Sigmoid colon (tissue), 7 donors: ENCODE measurements at regions of chr19 and their contacts with region 1.

Region 1: GRCh38 chr19:13262450-13262849 is 112.2 kb downstream of the IER2 start:
- DNase-seq: no peak
- H3K4me3 ChIP-seq: no peak overlapping the region
- H3K27ac ChIP-seq: no peak overlapping the region
- H3K4me1 ChIP-seq: no peaks in the 10 kb centered on the region
- H3K27me3 ChIP-seq: peaks cover 0 to 7% (median 0%) of the 10 kb centered on the region in 3 donors
- CTCF ChIP-seq: peak; percentile 43 to 56 (median 49)
- EP300 ChIP-seq: no peak
- POLR2A ChIP-seq: no peak

Region 2: DNA sequence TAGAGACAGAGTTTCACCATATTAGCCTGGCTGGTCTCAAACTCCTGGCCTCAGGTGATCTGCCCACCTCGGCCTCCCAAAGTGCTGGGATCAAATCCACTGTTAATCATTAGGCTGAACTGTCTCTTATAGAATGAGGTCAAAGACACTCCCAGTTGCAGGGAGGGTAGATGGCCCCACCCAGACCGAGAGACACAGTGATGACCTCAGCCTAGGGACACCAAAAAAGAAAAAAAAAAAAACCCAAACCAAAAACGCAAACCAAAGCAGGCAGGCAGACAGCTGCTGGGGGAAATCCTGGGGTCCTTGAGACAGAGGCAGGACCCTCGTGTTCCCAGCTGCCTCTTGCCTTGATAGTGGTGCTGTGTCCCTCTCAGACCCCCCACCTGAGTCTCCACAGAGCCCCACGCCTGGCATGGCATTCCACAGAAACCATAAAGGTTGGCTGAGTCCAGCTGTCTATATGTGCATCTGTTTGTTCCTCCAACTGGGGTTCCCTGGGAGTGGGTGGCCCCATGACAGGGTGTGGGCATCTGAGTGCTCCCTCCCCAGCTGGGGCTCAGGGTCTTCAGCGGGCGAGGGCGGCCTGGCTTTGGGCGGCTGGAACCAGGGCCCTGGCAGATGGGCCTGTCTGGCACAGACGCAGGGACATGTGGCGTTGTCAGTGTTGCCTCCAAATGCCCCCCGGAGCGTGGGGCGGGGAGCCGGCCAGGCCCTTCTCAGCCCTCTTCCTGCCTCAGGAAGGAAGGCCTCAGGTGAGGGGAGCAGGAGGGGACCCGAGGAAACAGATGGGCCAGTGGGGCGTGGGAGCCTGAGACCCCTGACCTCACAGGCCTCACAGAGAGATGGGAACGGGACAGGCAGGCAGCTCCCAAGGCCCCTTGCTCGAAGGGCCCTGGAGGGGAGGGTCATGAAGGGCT is 287.9 kb before region 1 on chr19:
- intact Hi-C with region 1: loop called (anchors 2 kb)
- DNase-seq: no peak
- H3K4me3 ChIP-seq: no peak overlapping the region
- H3K27ac ChIP-seq: no peak overlapping the region
- H3K4me1 ChIP-seq: peaks cover 0 to 10% (median 3%) of the 10 kb centered on the region in 4 donors
- H3K27me3 ChIP-seq: no peaks in the 10 kb centered on the region
- CTCF ChIP-seq: no peak
- EP300 ChIP-seq: no peak
- POLR2A ChIP-seq: no peak

Region 3: GRCh38 chr19:13117772-13118423 is 144.6 kb before region 1 on chr19 and contains the start of gene NACC1:
- intact Hi-C with region 1: loop called (anchors 5 kb)
- DNase-seq: peak; percentile 93
- H3K4me3 ChIP-seq: peak within 1 kb of the TSS; percentile 91 to 99 (median 96)
- H3K27ac ChIP-seq: peak within 1 kb of the TSS; percentile 74 to 83 (median 78)
- H3K4me1 ChIP-seq: peaks cover 0 to 49% (median 43%) of the 10 kb centered on the region in 4 donors
- H3K27me3 ChIP-seq: no peaks in the 10 kb centered on the region
- CTCF ChIP-seq: no peak
- EP300 ChIP-seq: no peak
- POLR2A ChIP-seq: no peak
- total RNA-seq, gene NACC1: 8.1 to 20.5 (median 17.3) TPM

Region 4: DNA sequence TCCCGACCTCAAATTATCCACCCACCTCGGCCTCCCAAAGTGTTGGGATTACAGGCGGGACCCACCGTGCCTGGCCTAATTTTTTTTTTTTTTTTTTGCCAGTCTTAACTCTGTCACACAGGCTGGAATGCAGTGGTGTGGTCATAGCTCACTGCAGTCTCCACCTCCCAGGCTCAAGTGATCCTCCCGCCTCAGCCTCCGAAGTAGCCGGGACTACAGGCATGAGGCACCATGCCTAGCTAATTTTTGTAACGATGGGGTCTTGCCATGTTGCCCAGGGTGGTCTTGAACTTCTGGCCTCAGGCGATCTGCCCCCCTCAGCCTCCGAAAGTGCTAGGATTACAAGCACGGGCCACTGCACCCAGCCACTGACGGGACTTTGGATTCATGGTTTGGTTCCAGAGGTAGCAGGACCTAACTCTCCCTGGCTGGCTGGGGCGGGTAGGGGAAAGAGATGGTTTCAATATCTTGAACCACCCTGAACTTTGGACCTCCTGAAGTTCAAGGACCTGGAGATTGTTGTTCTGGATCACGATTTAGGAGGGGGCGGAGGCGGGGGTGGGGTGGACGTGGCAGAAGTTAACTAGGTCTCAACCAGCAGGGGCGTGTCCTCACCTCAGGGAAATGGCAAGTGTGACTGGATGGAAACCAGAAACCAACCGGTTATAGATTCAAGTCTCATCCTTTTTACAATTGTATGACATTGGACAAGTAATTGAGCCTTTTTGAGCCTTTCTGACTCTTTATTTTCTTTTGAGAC is 71.5 kb before region 1 on chr19:
- intact Hi-C with region 1: loop called (anchors 5 kb)
- DNase-seq: no peak
- H3K4me3 ChIP-seq: no peak overlapping the region
- H3K27ac ChIP-seq: no peak overlapping the region
- H3K4me1 ChIP-seq: no peaks in the 10 kb centered on the region
- H3K27me3 ChIP-seq: no peaks in the 10 kb centered on the region
- CTCF ChIP-seq: no peak
- EP300 ChIP-seq: no peak
- POLR2A ChIP-seq: no peak

Region 5: DNA sequence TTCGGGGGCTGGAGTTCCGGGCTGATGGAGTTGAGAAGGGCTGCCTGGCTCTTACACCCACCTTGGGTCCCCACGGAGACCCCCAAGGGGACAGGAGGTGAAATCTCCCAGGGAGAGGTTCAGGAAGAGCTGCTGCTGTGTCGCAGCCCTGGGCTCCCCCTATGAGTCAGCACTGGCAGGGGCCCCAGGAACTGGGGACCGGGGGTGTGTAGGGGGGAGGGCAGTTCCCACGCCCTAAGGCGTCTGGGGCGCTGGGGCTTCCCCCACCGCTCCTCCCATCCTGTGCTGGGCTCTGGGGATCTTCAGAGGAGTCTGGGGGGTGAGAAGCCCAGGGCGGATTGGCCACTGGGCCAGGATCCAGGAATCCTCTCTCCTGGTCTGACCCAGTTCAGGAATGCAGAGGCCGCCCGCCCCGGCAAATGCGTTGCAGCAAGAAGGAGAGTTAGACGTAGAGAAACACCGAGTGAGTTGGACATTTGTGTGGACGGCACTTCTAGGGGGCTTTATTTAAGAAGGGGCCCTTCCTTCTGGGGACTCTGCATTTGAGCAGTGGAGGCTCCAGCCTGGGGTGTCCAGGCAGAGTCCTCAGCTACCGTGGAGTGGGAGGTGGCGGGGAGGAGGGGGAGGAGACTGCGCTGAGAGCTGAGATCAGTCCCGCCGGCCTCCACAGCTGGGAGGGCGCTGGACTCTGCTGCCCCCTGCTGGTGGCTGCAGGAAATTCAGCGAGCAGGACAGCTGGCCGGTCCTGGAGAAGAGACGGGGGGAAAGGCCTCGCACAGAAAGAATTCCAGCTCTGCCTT is 599.5 kb after region 1 on chr19:
- intact Hi-C with region 1: no loop called
- DNase-seq: peak; percentile 97
- H3K4me3 ChIP-seq: peak overlapping the region; percentile 11 to 52 (median 40)
- H3K27ac ChIP-seq: peak overlapping the region; percentile 89 to 97 (median 93)
- H3K4me1 ChIP-seq: peaks cover 0 to 39% (median 26%) of the 10 kb centered on the region in 4 donors
- H3K27me3 ChIP-seq: no peaks in the 10 kb centered on the region
- CTCF ChIP-seq: peak; percentile 98 to 100 (median 99)
- EP300 ChIP-seq: peak in 2 of 4 donors; percentile 5 to 31
- POLR2A ChIP-seq: peak; percentile 25 to 32